Naive thymus-derived CD4-positive, alpha-beta T cell (primary cell): ENCODE measurements at regions of chrX and their contacts with region 1.

Region 1: GRCh38 chrX:42615161-42615563 is 162.8 kb downstream of the PPP1R2C start:
- DNase-seq: peak in 1 of 9 donors; percentile 2
- ATAC-seq: no peak
- H3K4me3 ChIP-seq: no peak overlapping the region
- H3K4me3 Mint-ChIP-seq: no peak overlapping the region
- H3K27ac ChIP-seq: no peak overlapping the region
- H3K27ac Mint-ChIP-seq: no peak overlapping the region
- H3K4me1 ChIP-seq: no peaks in the 10 kb centered on the region
- H3K4me1 Mint-ChIP-seq: peaks cover 0 to 16% (median 12%) of the 10 kb centered on the region in 7 donors
- H3K27me3 ChIP-seq: no peaks in the 10 kb centered on the region
- H3K27me3 Mint-ChIP-seq: no peaks in the 10 kb centered on the region

Region 2: DNA sequence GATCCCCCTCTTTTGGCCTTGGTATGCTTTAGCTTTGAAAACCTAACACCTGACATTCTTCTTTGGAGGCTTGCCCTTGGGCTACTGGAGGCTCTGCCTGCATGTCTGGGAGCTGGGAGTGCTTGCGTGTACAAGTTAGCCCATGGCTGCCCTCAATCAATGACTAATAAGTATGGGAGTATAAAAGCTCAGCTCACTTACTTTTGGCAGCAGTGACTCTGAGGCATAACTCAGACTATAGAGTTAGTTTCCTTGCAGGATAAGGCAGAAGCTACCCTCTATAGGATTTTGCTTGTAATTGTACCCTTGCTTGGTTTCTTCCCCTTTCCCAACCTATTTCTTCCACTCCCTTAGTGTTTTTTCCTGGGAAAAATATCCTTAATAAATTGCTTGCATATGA is 85.1 kb before region 1 on chrX:
- CTCF ChIA-PET with region 1: no interaction called
- POLR2A ChIA-PET with region 1: no interaction called
- intact Hi-C with region 1: no loop called
- DNase-seq: no peak
- ATAC-seq: no peak
- H3K4me3 ChIP-seq: no peak overlapping the region
- H3K4me3 Mint-ChIP-seq: no peak overlapping the region
- H3K27ac ChIP-seq: no peak overlapping the region
- H3K27ac Mint-ChIP-seq: peak overlapping the region in 1 of 9 donors; percentile 75
- H3K4me1 ChIP-seq: no peaks in the 10 kb centered on the region
- H3K4me1 Mint-ChIP-seq: peaks cover 0 to 13% (median 0%) of the 10 kb centered on the region in 7 donors
- H3K27me3 ChIP-seq: no peaks in the 10 kb centered on the region
- H3K27me3 Mint-ChIP-seq: no peaks in the 10 kb centered on the region

Region 3: DNA sequence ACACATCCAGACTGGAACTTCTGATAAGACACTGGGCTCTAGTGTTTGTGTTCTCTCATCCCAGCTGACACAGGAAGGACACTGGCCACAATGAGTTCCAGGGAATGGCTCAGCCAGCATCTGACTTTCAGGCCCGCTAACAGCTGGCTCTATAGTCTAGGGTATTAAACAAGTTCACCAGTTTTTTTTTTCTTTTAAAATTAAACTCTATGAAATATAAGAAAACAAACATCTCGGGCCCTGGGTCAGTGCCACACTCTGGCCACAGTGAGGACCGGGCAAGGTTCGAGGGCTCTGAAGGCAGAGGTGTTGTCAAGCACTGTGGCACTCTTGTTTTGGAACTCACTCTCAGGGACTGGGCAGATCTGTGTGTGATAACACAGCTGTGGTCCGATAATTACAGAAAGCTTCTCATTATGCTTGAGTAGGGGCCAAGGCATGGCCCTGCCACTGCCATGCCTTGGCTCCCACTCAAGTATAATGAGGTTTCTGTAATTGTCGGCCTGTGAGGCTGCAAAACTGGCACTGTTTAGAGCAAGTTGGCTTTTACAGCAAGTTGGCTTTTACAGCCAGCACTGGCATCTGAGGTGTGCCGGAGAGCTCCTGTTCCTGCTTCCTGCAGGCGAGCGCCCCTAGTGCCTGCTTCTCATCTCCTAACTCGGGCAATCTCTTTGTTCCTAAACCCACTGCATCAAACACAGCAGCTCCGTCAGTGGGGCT is 100.0 kb after region 1 on chrX:
- CTCF ChIA-PET with region 1: no interaction called
- POLR2A ChIA-PET with region 1: no interaction called
- intact Hi-C with region 1: loop called in 1 of 2 experiments (anchors 10 kb)
- DNase-seq: peak in 7 of 9 donors; percentile 11 to 48 (median 36)
- ATAC-seq: peak; percentile 54
- H3K4me3 ChIP-seq: no peak overlapping the region
- H3K4me3 Mint-ChIP-seq: peak overlapping the region in 4 of 10 donors; percentile 16 to 40 (median 32)
- H3K27ac ChIP-seq: no peak overlapping the region
- H3K27ac Mint-ChIP-seq: peak overlapping the region in 1 of 9 donors; percentile 60
- H3K4me1 ChIP-seq: no peaks in the 10 kb centered on the region
- H3K4me1 Mint-ChIP-seq: peaks cover 0 to 14% (median 7%) of the 10 kb centered on the region in 7 donors
- H3K27me3 ChIP-seq: no peaks in the 10 kb centered on the region
- H3K27me3 Mint-ChIP-seq: no peaks in the 10 kb centered on the region

Region 4: DNA sequence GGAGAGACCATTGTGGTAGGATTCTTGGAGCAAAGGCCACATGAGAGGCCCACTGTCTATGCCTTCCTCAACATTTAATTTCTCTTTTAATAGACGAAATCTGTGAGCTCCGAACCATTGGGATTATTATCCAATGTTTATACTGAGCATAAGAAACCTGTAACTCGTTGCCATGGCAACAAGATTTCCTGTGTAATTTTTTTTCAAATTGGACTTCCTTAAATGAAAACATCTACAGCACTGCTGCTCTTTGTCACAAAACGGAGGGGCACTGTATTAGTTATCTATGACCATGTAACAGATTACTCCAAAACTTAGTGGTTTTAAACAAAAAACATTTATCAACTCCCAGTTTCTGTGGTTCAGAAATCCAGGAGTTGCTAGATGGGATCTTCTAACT is 124.1 kb after region 1 on chrX:
- CTCF ChIA-PET with region 1: no interaction called
- POLR2A ChIA-PET with region 1: no interaction called
- intact Hi-C with region 1: no loop called
- DNase-seq: peak in 5 of 9 donors; percentile 18 to 51 (median 40)
- ATAC-seq: no peak
- H3K4me3 ChIP-seq: no peak overlapping the region
- H3K4me3 Mint-ChIP-seq: peak overlapping the region in 7 of 10 donors; percentile 23 to 64 (median 36)
- H3K27ac ChIP-seq: peak overlapping the region; percentile 10
- H3K27ac Mint-ChIP-seq: peak overlapping the region in 8 of 9 donors; percentile 62 to 90 (median 80)
- H3K4me1 ChIP-seq: peaks cover 0 to 4% of the 10 kb centered on the region in 2 donors
- H3K4me1 Mint-ChIP-seq: peaks cover 0 to 31% (median 25%) of the 10 kb centered on the region in 7 donors
- H3K27me3 ChIP-seq: no peaks in the 10 kb centered on the region
- H3K27me3 Mint-ChIP-seq: no peaks in the 10 kb centered on the region